Upper lobe of right lung (tissue), 1 donor: ENCODE measurements at regions of chr6 and their contacts with region 1.

Region 1: DNA sequence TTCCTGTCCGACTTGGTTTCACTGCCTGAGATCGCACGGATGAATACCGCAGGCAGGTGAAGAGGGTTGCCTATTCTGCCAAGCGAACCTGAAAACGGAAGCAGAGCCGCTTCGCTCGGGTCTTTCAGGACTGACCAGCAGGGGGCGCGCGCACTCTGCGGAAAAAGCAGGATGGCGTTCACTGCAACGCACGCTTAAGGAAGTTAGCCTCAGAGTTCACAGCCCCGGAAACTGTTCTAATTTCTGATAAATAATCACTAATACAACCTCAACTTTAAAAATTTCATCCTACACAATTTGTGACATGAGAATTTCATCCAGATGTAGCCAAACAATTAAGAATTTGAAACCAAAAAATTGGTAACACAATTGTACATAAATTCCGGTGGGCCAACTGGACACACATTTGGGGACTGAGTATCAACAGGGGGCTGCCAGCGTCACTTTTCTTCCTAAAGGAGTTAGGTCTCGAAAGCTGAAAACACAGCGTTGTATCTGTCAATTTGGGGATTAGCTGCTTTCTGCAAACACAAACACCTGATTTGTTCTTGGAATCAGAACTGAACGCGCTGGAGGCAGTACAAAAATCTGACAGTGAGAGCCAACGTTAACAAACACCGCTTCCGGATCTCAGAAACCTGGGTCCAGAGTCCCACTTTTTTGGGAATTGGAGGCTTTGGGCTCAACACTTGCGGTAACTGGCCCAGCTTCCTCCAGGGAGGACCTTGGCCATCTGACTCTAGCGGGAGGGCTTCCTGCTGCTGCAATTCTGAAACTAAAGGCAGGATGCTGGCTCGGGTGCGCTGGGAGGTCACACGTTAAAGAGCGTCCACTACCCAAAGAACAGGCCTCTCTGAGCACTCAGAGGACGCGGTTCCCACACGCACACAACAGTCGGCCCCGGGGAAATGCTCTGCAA is 8.8 kb downstream of the PXDC1 start:
- DNase-seq: peak; percentile 93
- ATAC-seq: peak; percentile 90
- H3K4me3 ChIP-seq: peak overlapping the region; percentile 11
- H3K27ac ChIP-seq: peak overlapping the region; percentile 49
- H3K4me1 ChIP-seq: peaks cover 58% of the 10 kb centered on the region
- H3K27me3 ChIP-seq: no peaks in the 10 kb centered on the region
- CTCF ChIP-seq: peak; percentile 95

Region 2: DNA sequence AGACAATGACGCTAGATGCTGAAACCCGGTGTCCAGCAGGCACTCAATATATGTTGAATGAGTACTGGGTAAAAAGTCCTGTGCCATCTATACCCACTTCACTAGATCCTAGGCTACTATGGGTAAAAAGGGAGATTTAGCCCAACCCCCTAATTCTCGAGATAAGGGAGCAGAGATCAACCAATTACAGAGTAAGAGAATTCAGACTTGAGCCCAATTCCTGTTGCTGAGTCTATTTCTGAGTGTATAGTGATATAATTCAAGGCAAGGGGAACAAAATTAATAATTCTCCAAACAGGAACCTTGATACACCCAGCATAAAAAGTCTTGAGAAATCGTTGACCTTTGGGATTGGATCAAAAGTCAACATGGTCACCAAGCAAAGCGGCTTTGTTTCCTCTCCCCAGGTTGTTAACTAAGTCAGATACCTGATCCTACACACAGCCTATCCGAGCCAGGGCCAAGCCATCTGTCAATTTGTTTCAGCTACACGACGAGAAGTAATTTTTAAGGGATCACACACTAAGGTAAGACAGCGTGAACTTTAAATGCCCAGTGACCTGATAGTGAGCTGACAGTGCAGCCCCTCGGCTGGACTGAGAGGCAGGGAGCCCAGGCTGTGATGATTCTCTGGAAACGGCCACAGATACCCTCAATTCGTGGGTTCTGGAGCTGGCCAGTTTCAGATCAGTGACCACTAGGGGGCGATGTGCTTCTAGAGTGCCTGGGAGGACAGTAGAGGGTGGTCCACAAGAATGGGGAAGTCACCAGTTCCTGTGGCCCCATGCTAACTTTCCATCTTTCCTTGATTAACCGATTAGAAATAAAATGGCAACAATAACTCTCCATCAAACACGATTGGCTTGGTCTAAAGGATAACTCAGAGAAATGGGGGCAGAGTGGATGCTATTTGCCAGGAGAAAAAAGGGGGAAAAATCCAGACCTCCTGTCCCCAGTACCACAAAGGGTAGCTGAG is 332.0 kb before region 1 on chr6:
- intact Hi-C with region 1: no loop called
- DNase-seq: peak; percentile 60
- ATAC-seq: peak; percentile 54
- H3K4me3 ChIP-seq: no peak overlapping the region
- H3K27ac ChIP-seq: peak overlapping the region; percentile 65
- H3K4me1 ChIP-seq: peaks cover 38% of the 10 kb centered on the region
- H3K27me3 ChIP-seq: no peaks in the 10 kb centered on the region
- CTCF ChIP-seq: peak; percentile 65

Region 3: DNA sequence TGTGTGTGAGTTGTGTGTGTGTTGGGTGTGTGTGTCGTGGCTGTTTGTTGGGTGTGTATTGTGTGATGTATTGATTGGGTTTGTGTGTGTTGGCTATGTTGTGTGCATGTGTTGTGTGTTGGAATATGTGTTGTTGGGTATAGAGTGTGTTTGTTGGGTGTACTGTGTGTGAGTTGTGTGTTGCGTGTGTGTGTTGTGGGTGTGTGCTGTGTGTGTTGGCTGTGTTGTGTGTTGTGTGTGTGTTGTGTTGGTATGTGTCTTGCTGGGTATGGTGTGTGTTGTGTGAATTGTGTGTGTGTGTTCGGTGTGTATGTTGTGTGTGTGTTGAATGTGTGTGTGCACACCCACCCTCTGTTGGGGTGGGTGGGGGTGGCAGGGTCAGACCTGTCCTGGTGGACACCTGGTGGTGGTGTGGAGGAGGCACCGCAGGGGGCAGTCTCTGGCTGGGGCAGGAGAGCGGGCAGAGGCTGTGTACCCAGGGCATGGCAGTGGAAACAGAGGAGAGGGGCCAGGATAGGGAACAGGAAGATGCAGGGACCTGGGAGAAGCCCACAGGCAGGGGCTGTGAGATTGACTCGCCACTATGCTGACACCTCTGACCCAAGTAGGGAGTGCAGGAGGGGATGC is 34.3 kb after region 1 on chr6:
- intact Hi-C with region 1: no loop called
- DNase-seq: no peak
- ATAC-seq: peak; percentile 44
- H3K4me3 ChIP-seq: no peak overlapping the region
- H3K27ac ChIP-seq: no peak overlapping the region
- H3K4me1 ChIP-seq: peaks cover 5% of the 10 kb centered on the region
- H3K27me3 ChIP-seq: no peaks in the 10 kb centered on the region
- CTCF ChIP-seq: no peak

Region 4: DNA sequence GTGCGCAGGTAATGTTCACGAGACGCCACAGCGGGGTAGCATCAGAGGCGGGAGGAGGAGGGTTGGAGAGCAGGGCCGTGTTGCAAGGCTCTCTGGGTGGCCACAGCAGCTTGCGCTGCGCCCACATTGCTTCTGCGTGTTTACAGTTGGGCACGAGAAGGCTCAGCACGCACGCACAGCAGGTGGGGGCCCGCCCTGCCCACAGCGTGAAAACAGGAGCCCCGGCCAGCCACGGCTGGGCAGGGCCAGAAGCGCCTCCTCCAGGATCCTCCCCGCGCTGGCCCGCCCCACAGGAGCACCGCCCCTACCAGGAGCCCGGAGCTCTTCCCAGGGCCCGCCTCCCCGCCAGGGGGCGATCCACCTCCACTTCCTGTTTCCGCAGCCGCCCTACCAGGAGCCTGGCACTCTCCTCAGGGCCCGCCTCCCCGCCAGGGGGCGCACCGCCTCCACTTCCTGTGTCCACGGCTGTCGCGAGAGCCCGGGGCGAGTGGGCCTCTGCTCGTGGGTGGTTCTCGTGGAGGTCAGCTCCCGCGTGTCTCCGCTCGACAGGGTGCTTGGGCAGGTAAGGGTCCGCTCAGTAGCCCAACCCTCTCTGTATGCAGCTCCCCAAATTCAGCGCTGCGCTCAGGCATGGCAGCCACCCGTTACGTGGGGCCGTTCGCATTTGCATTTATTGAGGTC is 106.4 kb after region 1 on chr6 and contains the start of gene FAM50B:
- intact Hi-C with region 1: loop called (anchors 10 kb)
- DNase-seq: peak; percentile 96
- ATAC-seq: peak; percentile 99
- H3K4me3 ChIP-seq: peak within 1 kb of the TSS; percentile 48
- H3K27ac ChIP-seq: peak within 1 kb of the TSS; percentile 61
- H3K4me1 ChIP-seq: peaks cover 8% of the 10 kb centered on the region
- H3K27me3 ChIP-seq: no peaks in the 10 kb centered on the region
- CTCF ChIP-seq: peak; percentile 91
- total RNA-seq, gene FAM50B: 13.1 TPM

Region 5: DNA sequence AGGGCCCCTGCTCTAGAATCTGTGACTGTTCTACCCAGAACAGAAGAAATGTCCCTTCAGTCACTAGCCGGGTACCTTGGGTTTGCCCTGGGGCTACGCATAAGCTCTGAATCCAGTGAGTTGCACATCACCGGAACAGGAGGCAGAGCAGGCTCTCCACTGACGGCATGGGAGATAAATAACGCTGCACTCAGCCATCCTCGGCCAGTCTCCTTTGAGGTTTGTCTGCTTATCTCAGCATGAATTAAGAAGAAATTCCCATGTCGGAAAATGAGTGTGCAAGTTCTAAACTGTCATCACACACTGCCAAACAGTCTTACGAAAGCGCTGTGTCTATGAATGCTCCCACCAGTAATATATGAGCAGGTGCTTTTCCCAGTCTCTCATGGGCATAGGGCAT is 197.3 kb after region 1 on chr6:
- intact Hi-C with region 1: loop called (anchors 10 kb)
- DNase-seq: no peak
- ATAC-seq: no peak
- H3K4me3 ChIP-seq: no peak overlapping the region
- H3K27ac ChIP-seq: no peak overlapping the region
- H3K4me1 ChIP-seq: no peaks in the 10 kb centered on the region
- H3K27me3 ChIP-seq: peaks cover 4% of the 10 kb centered on the region
- CTCF ChIP-seq: no peak

Region 6: GRCh38 chr6:3987053-3987452 is 244.4 kb after region 1 on chr6:
- intact Hi-C with region 1: loop called (anchors 10 kb)
- DNase-seq: no peak
- ATAC-seq: no peak
- H3K4me3 ChIP-seq: no peak overlapping the region
- H3K27ac ChIP-seq: no peak overlapping the region
- H3K4me1 ChIP-seq: peaks cover 7% of the 10 kb centered on the region
- H3K27me3 ChIP-seq: no peaks in the 10 kb centered on the region
- CTCF ChIP-seq: no peak